Common myeloid progenitor, CD34-positive (primary cell): ENCODE measurements at regions of chr2 and their contacts with region 1.

Region 1: DNA sequence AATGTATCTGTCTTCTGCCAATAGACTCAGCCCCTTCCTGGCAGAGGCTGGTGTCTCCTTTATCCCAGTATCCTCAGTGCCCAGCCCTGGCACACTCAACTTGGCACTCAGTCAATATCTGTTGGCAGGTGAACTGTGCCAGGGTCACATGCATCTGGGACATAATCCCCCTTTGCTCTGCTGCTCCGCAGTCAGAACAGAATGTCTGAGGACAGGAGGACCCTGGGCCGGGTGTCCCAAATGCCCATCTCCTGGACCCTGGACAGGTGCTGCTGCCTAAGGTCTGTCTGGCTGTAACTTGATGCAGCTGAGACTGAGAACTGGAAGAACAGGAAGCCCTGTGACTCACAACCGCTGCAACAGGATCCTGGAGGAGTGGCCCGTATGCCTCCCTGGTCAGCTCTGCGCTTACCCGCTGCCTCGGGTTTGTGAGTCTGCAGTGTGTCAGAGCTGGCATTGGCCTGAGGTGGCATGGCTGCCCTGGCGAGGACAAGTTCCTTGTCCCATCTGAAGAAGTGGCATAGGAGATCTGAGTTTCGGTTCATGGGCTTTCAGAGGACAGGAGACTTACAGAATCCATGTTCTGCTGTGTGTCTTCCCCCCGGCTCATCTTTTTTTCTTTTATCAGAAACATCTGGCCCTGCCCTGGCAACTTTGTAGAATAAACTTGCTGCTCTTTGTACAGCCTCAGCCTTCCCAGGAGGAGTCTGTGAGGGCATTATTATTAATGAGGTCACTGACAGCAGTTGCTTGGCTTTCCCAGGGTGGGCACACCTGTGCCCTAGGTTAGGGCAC is 11.5 kb downstream of the HK2 start:
- DNase-seq: peak in 2 of 3 donors; percentile 76 to 85
- H3K4me3 ChIP-seq: peak overlapping the region in 4 of 7 experiments; percentile 25 to 38 (median 32)
- H3K27ac ChIP-seq: peak overlapping the region; percentile 20 to 60
- H3K4me1 ChIP-seq: peaks cover 45 to 85% (median 76%) of the 10 kb centered on the region in 4 experiments
- H3K27me3 ChIP-seq: no peaks in the 10 kb centered on the region

Region 2: DNA sequence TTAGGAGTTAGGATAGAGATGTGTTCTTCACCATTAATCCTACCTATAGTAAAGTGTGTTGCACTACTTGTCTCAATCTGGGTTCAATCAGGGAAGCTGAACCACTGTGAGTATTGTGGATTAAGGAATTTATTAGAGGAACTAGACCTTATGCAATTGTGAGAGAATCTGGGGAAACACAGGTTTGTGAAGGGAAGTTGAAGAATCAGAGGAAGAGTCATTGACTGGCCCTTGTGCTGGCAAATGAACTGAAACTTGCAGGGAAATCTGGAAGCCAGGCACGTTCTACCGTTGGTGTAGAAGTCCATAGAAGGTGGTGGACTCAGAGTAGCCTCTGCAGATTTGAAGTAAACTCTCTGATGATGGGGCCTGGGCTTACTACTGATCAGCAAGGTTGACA is 56.1 kb before region 1 on chr2:
- CTCF ChIA-PET with region 1: no interaction called
- POLR2A ChIA-PET with region 1: no interaction called
- DNase-seq: no peak
- H3K4me3 ChIP-seq: no peak overlapping the region
- H3K27ac ChIP-seq: no peak overlapping the region
- H3K4me1 ChIP-seq: no peaks in the 10 kb centered on the region
- H3K27me3 ChIP-seq: no peaks in the 10 kb centered on the region

Region 3: GRCh38 chr2:74833418-74834233 is 11.8 kb before region 1 on chr2 and contains the start of gene HK2:
- CTCF ChIA-PET with region 1: interaction called, 49 read pairs
- POLR2A ChIA-PET with region 1: interaction called, 3 read pairs
- DNase-seq: peak; percentile 89 to 94 (median 92)
- H3K4me3 ChIP-seq: peak within 1 kb of the TSS; percentile 68 to 90 (median 78)
- H3K27ac ChIP-seq: peak within 1 kb of the TSS in 1 of 2 experiments; percentile 66
- H3K4me1 ChIP-seq: peaks cover 25 to 59% (median 50%) of the 10 kb centered on the region in 4 experiments
- H3K27me3 ChIP-seq: no peaks in the 10 kb centered on the region